CD8-positive, alpha-beta memory T cell (primary cell): ENCODE measurements at regions of chr7 and their contacts with region 1.

Region 1: GRCh38 chr7:142811154-142811737 is 40.5 kb downstream of the PRSS2 start:
- DNase-seq: peak in 4 of 5 donors; percentile 34 to 81 (median 66)
- H3K4me3 ChIP-seq: no peak overlapping the region
- H3K4me3 Mint-ChIP-seq: peak overlapping the region; percentile 24 to 58 (median 45)
- H3K27ac ChIP-seq: peak overlapping the region; percentile 35
- H3K27ac Mint-ChIP-seq: peak overlapping the region; percentile 77 to 100 (median 100)
- H3K4me1 ChIP-seq: peaks cover 74% of the 10 kb centered on the region
- H3K4me1 Mint-ChIP-seq: peaks cover 60 to 78% (median 72%) of the 10 kb centered on the region in 3 donors
- H3K27me3 ChIP-seq: no peaks in the 10 kb centered on the region
- H3K27me3 Mint-ChIP-seq: peaks cover 5 to 10% of the 10 kb centered on the region in 2 donors

Region 2: DNA sequence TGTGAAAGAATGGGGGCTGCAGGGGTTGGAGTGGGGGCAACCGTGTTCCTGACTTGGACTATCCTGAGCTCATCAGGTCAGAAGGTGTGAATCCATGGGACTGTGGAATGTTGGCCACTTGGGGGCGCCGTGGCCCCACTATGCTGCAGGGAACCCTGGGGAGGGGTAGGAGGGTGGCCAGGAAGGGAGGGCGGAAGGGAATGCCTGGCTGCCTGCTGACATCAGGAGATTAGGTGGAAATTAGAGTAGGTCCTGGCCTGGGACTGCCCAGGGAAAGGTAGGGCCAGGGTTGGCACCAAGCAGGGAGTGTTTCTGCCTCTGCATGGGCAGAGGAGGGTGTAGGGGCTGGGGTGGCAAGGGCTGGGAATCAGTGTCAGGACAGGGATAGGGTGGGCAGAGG is 487.5 kb before region 1 on chr7:
- CTCF ChIA-PET with region 1: interaction called, 10 read pairs
- POLR2A ChIA-PET with region 1: interaction called, 7 read pairs
- DNase-seq: peak in 3 of 5 donors; percentile 25 to 54 (median 36)
- H3K4me3 ChIP-seq: no peak overlapping the region
- H3K4me3 Mint-ChIP-seq: peak overlapping the region in 4 of 7 donors; percentile 3 to 57 (median 42)
- H3K27ac ChIP-seq: no peak overlapping the region
- H3K27ac Mint-ChIP-seq: peak overlapping the region; percentile 10 to 90 (median 64)
- H3K4me1 ChIP-seq: peaks cover 10% of the 10 kb centered on the region
- H3K4me1 Mint-ChIP-seq: peaks cover 22 to 24% (median 22%) of the 10 kb centered on the region in 3 donors
- H3K27me3 ChIP-seq: no peaks in the 10 kb centered on the region
- H3K27me3 Mint-ChIP-seq: peaks cover 0 to 16% of the 10 kb centered on the region in 2 donors

Region 3: GRCh38 chr7:142632291-142633134 is 178.7 kb before region 1 on chr7:
- CTCF ChIA-PET with region 1: interaction called, 9 read pairs
- POLR2A ChIA-PET with region 1: interaction called, 20 read pairs
- DNase-seq: peak; percentile 18 to 68 (median 56)
- H3K4me3 ChIP-seq: no peak overlapping the region
- H3K4me3 Mint-ChIP-seq: no peak overlapping the region
- H3K27ac ChIP-seq: no peak overlapping the region
- H3K27ac Mint-ChIP-seq: peak overlapping the region in 3 of 8 donors; percentile 21 to 84 (median 23)
- H3K4me1 ChIP-seq: no peaks in the 10 kb centered on the region
- H3K4me1 Mint-ChIP-seq: peaks cover 5 to 18% (median 12%) of the 10 kb centered on the region in 3 donors
- H3K27me3 ChIP-seq: no peaks in the 10 kb centered on the region
- H3K27me3 Mint-ChIP-seq: peaks cover 0 to 3% of the 10 kb centered on the region in 2 donors

Region 4: GRCh38 chr7:142711746-142712619 is 99.3 kb before region 1 on chr7:
- CTCF ChIA-PET with region 1: interaction called, 32 read pairs
- POLR2A ChIA-PET with region 1: interaction called, 14 read pairs
- DNase-seq: peak in 2 of 5 donors; percentile 27 to 49
- H3K4me3 ChIP-seq: peak overlapping the region; percentile 70
- H3K4me3 Mint-ChIP-seq: peak overlapping the region; percentile 83 to 93 (median 88)
- H3K27ac ChIP-seq: peak overlapping the region; percentile 38
- H3K27ac Mint-ChIP-seq: peak overlapping the region; percentile 87 to 98 (median 94)
- H3K4me1 ChIP-seq: peaks cover 50% of the 10 kb centered on the region
- H3K4me1 Mint-ChIP-seq: peaks cover 56 to 78% (median 74%) of the 10 kb centered on the region in 3 donors
- H3K27me3 ChIP-seq: no peaks in the 10 kb centered on the region
- H3K27me3 Mint-ChIP-seq: no peaks in the 10 kb centered on the region

Region 5: GRCh38 chr7:142873281-142873787 is 62.1 kb after region 1 on chr7:
- CTCF ChIA-PET with region 1: no interaction called
- POLR2A ChIA-PET with region 1: no interaction called
- DNase-seq: no peak
- H3K4me3 ChIP-seq: no peak overlapping the region
- H3K4me3 Mint-ChIP-seq: no peak overlapping the region
- H3K27ac ChIP-seq: no peak overlapping the region
- H3K27ac Mint-ChIP-seq: no peak overlapping the region
- H3K4me1 ChIP-seq: no peaks in the 10 kb centered on the region
- H3K4me1 Mint-ChIP-seq: no peaks in the 10 kb centered on the region
- H3K27me3 ChIP-seq: no peaks in the 10 kb centered on the region
- H3K27me3 Mint-ChIP-seq: peaks cover under 1 to 6% of the 10 kb centered on the region in 2 donors

Region 6: DNA sequence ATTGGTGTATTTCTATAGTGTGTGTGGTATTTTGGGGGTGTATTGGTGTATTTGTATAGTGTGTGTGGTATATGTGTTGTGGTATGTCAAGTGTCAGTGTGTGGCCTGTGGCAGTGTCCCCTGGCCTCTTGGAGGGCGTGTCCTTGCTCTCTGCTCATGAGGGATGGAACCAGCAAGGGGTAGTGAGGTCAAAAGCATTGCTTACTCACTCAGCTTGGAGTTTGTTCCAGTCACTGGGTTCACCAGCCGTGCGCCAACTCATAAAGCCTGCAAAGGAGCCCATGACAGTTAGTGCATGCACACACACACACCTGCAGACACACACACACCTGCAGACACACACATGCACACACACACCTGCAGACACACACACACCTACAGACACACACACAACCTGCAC is 78.6 kb after region 1 on chr7:
- CTCF ChIA-PET with region 1: no interaction called
- POLR2A ChIA-PET with region 1: no interaction called
- DNase-seq: no peak
- H3K4me3 ChIP-seq: no peak overlapping the region
- H3K4me3 Mint-ChIP-seq: no peak overlapping the region
- H3K27ac ChIP-seq: no peak overlapping the region
- H3K27ac Mint-ChIP-seq: no peak overlapping the region
- H3K4me1 ChIP-seq: no peaks in the 10 kb centered on the region
- H3K4me1 Mint-ChIP-seq: no peaks in the 10 kb centered on the region
- H3K27me3 ChIP-seq: no peaks in the 10 kb centered on the region
- H3K27me3 Mint-ChIP-seq: peaks cover 8 to 21% of the 10 kb centered on the region in 2 donors

Region 7: GRCh38 chr7:143008007-143008901 is 197.0 kb after region 1 on chr7:
- CTCF ChIA-PET with region 1: interaction called, 14 read pairs
- POLR2A ChIA-PET with region 1: no interaction called
- DNase-seq: peak; percentile 66 to 85 (median 69)
- H3K4me3 ChIP-seq: no peak overlapping the region
- H3K4me3 Mint-ChIP-seq: no peak overlapping the region
- H3K27ac ChIP-seq: no peak overlapping the region
- H3K27ac Mint-ChIP-seq: peak overlapping the region in 1 of 8 donors; percentile 8
- H3K4me1 ChIP-seq: peaks cover 1% of the 10 kb centered on the region
- H3K4me1 Mint-ChIP-seq: peaks cover 6 to 9% (median 7%) of the 10 kb centered on the region in 3 donors
- H3K27me3 ChIP-seq: peaks cover 6% of the 10 kb centered on the region
- H3K27me3 Mint-ChIP-seq: peaks cover 4 to 14% of the 10 kb centered on the region in 2 donors